Ovary (tissue), 10 donors: ENCODE measurements at regions of chr2 and their contacts with region 1.

Region 1: GRCh38 chr2:208175069-208175839 is 11.9 kb upstream of the CRYGA start:
- DNase-seq: peak; percentile 69 to 84 (median 75)
- H3K4me3 ChIP-seq: no peak overlapping the region
- H3K27ac ChIP-seq: no peak overlapping the region
- H3K4me1 ChIP-seq: no peaks in the 10 kb centered on the region
- H3K27me3 ChIP-seq: no peaks in the 10 kb centered on the region
- CTCF ChIP-seq: peak; percentile 47 to 69 (median 65)
- EP300 ChIP-seq: no peak
- POLR2A ChIP-seq: no peak

Region 2: DNA sequence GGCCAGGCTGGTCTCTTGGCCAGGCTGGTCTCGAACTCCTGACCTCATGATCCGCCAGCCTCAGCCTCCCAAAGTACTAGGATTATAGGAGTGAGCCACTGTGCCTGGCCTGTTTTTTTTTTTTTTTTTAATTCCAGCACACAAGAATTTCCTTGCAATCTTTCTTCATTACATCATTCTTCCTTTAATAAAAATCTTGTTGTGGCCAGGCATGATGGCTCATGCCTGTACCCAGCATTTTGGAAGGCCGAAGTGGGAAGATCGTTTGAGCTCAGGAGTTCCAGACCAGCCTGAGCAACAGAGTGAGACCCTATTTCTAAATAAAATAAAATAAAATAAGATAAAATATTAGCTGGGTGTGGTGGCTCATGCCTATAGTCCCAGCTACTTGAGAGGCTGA is 128.6 kb before region 1 on chr2:
- intact Hi-C with region 1: no loop called
- DNase-seq: no peak
- H3K4me3 ChIP-seq: no peak overlapping the region
- H3K27ac ChIP-seq: no peak overlapping the region
- H3K4me1 ChIP-seq: no peaks in the 10 kb centered on the region
- H3K27me3 ChIP-seq: no peaks in the 10 kb centered on the region
- CTCF ChIP-seq: no peak
- EP300 ChIP-seq: no peak
- POLR2A ChIP-seq: no peak

Region 3: DNA sequence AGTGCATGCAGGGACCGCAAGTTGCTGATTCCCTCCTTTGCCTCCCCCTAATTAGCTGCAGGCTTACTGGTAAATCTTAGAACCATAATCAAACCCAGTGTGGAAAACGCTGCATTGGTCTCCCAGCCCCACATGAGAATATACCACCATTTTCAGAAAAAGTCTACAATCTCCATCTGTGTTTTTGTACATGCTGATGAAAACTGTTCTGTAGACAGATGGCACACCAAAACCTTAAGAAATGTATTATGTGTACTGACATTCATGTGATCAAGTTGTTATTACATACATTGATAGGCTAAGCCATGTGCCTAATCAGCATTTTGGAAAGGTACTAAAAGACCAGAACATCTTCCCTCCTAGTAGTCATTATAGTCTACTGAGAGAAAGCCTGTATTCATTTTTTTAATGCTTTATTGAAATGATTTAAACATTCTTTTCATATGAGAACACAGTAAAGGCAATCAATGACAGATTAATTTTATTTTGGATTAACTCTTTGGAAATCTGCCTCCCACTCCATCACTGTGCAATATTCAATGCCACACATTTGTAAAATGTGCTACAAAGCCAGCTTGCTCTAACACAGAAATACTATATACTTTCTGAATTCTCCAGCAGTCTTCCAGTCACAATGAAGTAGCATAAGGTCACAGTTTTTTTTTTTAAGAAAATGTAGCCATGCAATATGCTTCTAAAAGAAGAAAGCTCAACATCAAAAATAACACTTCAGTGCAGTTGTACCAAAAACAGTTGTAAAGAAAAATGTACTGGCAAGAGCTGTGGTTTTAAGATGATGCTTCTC is 10.1 kb before region 1 on chr2:
- intact Hi-C with region 1: loop called in 1 of 4 experiments (anchors 2 kb)
- DNase-seq: no peak
- H3K4me3 ChIP-seq: no peak overlapping the region
- H3K27ac ChIP-seq: no peak overlapping the region
- H3K4me1 ChIP-seq: no peaks in the 10 kb centered on the region
- H3K27me3 ChIP-seq: no peaks in the 10 kb centered on the region
- CTCF ChIP-seq: no peak
- EP300 ChIP-seq: no peak
- POLR2A ChIP-seq: no peak